ENCODE measurements at regions of chr19 and their contacts with region 1.

Region 1: DNA sequence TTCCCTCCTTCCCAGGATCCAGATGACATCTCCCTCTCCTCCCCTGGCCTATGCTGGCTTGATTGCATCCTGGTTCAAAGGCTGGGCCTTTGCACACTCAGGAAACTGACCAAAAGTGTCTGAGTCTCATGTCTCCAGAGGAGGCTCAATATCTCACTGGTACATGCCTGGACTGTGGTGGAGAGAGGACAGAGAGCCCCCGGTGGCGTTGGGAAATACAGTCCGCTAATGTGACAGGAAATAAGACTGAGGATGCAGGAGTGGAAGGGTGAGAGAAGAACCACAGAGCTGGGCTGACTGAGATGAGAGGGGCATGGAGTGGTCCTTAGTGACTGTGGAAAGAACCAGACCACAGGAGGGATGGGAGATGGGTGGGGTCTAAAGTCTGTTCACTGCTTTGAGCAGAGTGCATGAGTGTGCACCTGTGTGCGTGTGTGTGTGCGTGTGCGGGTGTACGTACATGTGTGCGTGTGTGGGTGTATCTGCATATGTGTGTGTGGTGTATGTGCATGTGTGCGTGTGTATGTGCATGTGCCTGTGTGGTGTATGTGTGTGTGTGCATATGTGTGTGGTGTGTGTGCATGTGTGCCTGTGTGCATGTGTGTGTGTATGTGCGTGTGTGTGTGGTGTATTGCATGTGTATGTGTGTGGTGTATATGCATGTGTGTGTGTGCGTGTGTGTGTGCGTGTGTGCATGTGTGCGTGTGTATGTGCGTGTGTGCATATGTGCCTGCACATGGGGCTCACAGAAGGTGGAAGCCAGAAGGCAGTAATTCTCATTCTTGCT is 1.9 kb downstream of the SIGLEC5 start:
- DNase-seq: no peak
- ATAC-seq: no peak
- H3K4me3 ChIP-seq: no peak overlapping the region
- H3K4me3 Mint-ChIP-seq: no peak overlapping the region
- H3K27ac ChIP-seq: no peak overlapping the region
- H3K27ac Mint-ChIP-seq: peak overlapping the region in 1 of 9 donors; percentile 52
- H3K4me1 ChIP-seq: no peaks in the 10 kb centered on the region
- H3K4me1 Mint-ChIP-seq: peaks cover 0 to 14% (median 0%) of the 10 kb centered on the region in 7 donors
- H3K27me3 ChIP-seq: no peaks in the 10 kb centered on the region
- H3K27me3 Mint-ChIP-seq: peaks cover 1 to 51% (median 30%) of the 10 kb centered on the region in 5 donors

Region 2: DNA sequence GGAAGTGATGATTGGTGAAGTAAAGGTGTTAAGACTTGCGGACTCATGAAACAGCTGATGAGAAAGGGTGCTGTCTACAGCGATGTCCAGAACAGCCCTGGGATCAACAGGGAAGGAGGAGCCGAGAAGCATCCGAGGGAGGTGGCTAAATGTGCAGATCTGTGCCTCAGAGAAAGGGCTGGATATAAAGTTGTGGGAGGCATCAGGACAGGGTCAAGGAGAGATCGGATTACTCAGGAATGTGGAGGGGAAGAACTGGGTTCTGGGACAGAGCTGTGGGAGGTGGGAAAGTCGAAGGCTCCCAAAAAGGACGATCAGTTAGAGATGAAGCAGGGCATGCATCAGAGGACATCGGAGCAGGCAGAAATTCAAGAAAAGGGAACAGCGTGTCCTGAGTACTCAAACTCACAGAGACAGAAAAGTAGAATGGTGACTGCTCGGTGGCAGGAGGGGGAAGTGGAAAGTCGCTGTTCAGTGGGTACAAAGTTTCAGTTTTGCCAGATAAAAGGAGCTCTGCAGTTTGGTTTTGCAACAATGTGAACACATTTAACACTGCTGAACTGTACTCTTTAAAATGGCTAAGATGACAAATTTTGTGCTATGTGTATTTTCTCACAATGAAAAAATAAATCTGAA is 16.4 kb after region 1 on chr19:
- CTCF ChIA-PET with region 1: no interaction called
- POLR2A ChIA-PET with region 1: no interaction called
- intact Hi-C with region 1: loop called in 1 of 2 experiments (anchors 1 kb)
- DNase-seq: no peak
- ATAC-seq: peak; percentile 42
- H3K4me3 ChIP-seq: no peak overlapping the region
- H3K4me3 Mint-ChIP-seq: no peak overlapping the region
- H3K27ac ChIP-seq: no peak overlapping the region
- H3K27ac Mint-ChIP-seq: peak overlapping the region in 2 of 9 donors; percentile 13 to 57
- H3K4me1 ChIP-seq: no peaks in the 10 kb centered on the region
- H3K4me1 Mint-ChIP-seq: peaks cover 0 to 10% (median 0%) of the 10 kb centered on the region in 7 donors
- H3K27me3 ChIP-seq: no peaks in the 10 kb centered on the region
- H3K27me3 Mint-ChIP-seq: peaks cover 11 to 38% (median 35%) of the 10 kb centered on the region in 5 donors